AG04449 (cell line): ENCODE measurements at regions of chr11 and their contacts with region 1.

Region 1: GRCh38 chr11:6531267-6531752 is 34.2 kb downstream of the DNHD1 start:
- DNase-seq: no peak
- H3K4me3 ChIP-seq: no peak overlapping the region
- CTCF ChIP-seq: peak; percentile 52

Region 2: DNA sequence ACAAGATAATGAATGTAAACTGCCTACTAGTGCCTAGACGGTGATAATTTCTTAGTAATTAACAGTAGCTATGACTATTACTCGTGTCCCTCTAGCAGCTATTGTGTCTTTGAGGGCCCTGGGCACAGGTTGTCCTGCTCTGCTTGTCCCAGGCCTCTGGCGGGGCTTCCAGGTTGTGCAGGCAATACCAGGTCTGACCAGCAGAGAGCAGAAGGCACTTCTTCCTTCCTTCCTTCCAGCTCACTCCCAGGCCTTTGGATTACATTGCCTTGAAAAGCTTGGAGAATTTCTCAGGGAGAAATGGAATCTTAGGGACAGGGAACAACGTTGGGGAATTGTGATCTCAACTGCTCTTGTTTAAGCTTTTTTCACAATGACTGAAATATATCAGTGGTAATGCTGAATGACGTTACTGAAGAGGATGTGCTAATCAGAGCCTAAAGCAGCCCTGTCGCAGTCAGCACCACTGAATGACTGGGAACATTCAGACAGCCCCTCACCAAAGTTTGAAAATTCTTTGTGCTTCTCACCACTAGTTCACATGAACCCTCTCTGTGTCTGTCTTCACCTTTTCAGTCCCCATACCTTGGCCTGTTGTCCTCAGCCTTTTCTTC is 280.1 kb before region 1 on chr11:
- CTCF ChIA-PET with region 1: no interaction called
- POLR2A ChIA-PET with region 1: no interaction called
- DNase-seq: no peak
- H3K4me3 ChIP-seq: no peak overlapping the region
- CTCF ChIP-seq: peak; percentile 94

Region 3: GRCh38 chr11:6263664-6264063 is 267.6 kb before region 1 on chr11:
- CTCF ChIA-PET with region 1: no interaction called
- POLR2A ChIA-PET with region 1: no interaction called
- DNase-seq: no peak
- H3K4me3 ChIP-seq: no peak overlapping the region
- CTCF ChIP-seq: no peak

Region 4: DNA sequence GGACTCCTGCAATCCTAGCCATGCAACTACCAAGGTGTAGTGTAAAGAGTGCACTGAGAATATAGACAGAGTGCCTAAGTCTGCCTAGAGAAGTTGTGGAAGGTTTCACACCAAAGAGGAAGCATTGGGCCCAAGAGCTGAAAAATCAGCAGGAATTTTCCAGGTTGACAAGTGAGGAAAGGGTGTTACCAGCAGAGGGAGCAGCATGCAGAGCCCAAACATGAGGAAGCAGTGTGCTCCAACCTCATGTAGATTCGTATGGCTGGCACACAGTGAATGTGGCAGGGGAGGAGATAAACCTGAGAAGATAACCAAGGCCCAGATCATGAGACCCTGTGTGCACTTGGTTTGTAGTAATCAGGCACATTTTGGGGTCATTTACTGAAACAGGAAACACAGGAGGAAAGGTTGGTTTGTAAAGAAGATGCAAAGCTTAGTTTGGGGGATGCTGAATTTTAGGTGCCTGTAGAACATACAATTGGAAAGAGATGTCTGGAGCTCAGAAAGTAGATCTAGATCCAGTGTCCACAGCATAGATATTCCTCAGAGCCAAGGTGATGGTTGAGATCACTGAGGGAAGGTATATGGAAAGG is 92.2 kb before region 1 on chr11:
- CTCF ChIA-PET with region 1: no interaction called
- POLR2A ChIA-PET with region 1: no interaction called
- DNase-seq: no peak
- H3K4me3 ChIP-seq: no peak overlapping the region
- CTCF ChIP-seq: peak; percentile 80

Region 5: GRCh38 chr11:6544921-6545850 is 13.9 kb after region 1 on chr11:
- CTCF ChIA-PET with region 1: interaction called, 60 read pairs
- POLR2A ChIA-PET with region 1: no interaction called
- DNase-seq: no peak
- H3K4me3 ChIP-seq: no peak overlapping the region
- CTCF ChIP-seq: no peak

Region 6: DNA sequence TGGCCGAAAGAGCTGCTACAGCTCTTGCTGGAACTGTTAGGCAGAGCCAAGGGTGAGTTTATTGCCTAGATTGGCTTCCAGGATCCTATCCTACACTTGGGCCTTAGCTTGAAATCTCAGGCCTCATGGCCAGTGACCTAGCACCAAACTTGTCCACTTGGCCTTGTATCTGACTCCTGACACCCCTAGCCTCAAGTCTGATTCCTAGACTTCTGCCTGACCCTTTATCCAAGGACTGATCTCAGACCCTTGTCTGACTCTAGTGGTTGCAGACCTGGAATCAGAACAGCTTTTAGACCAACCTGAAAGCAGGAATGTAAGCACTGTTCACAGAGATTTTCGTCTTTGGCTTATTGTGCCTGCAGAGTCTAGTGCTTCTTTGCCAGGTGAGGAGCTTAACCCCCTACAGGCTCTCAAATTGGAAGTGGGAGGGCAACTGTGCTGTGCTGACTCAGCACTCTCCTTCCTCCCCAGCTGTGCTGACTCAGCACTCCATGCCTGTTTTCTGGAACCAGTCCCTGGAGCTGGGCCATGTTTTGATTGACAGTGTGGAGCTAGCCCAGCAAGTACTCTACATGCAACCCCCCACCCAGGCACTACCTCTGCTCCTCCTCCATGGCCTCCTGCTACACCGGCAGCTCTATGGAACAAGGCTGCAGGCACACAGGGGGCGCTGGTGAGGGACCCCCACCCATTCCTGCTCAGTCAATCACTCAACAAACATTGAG is 37.0 kb after region 1 on chr11:
- CTCF ChIA-PET with region 1: interaction called, 14 read pairs
- POLR2A ChIA-PET with region 1: no interaction called
- DNase-seq: no peak
- H3K4me3 ChIP-seq: no peak overlapping the region
- CTCF ChIP-seq: no peak

Region 7: GRCh38 chr11:6612213-6613041 is 81.1 kb after region 1 on chr11 and contains the start of gene TAF10:
- CTCF ChIA-PET with region 1: interaction called, 19 read pairs
- POLR2A ChIA-PET with region 1: interaction called, 4 read pairs
- DNase-seq: peak; percentile 75
- H3K4me3 ChIP-seq: peak within 1 kb of the TSS; percentile 72
- CTCF ChIP-seq: peak; percentile 47

Region 8: DNA sequence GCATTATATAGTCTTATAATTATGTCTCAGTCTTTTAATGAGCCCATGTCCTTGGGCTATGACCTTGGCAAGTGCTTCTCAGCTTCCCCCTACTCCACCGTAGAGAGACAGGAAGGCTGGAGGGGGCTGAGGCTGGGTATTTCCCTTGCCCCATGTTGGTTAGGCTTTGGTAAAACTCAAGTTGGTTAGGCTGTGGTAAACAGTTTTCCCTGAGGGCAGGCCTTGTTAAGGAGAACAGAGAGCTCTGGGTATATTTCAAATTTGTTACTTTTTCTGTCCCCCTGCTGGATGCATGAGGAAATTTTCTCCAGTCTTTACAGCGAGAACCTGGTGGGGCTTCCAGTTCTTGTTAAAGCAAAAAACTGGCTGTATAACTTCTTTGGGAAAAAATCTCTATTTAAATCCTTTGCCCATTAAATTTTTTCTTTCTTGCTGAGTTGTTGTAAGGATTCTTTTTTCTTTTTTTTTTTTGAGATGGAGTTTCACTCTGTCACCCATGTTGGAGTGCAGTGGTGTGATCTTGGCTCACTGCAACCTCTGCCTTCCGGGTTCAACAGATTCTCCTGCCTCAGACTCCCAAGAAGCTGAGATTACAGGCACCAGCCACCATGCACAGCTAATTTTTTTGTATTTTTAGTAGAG is 136.5 kb after region 1 on chr11:
- CTCF ChIA-PET with region 1: interaction called, 23 read pairs
- POLR2A ChIA-PET with region 1: no interaction called
- DNase-seq: no peak
- H3K4me3 ChIP-seq: no peak overlapping the region
- CTCF ChIP-seq: peak; percentile 29

Region 9: GRCh38 chr11:6695377-6695776 is 164.1 kb after region 1 on chr11:
- CTCF ChIA-PET with region 1: interaction called, 13 read pairs
- POLR2A ChIA-PET with region 1: no interaction called
- DNase-seq: no peak
- H3K4me3 ChIP-seq: no peak overlapping the region
- CTCF ChIP-seq: no peak